ENCODE measurements at regions of chr17 and their contacts with region 1.

Region 1: GRCh38 chr17:61461967-61462718 is 9.9 kb downstream of the TBX4 start:
- DNase-seq: peak; percentile 57 to 73
- H3K4me3 ChIP-seq: peak overlapping the region; percentile 37
- H3K4me3 Mint-ChIP-seq: peak overlapping the region; percentile 72
- H3K27ac Mint-ChIP-seq: peak overlapping the region; percentile 72
- H3K4me1 ChIP-seq: peaks cover 68% of the 10 kb centered on the region
- H3K4me1 Mint-ChIP-seq: peaks cover 59% of the 10 kb centered on the region
- H3K27me3 ChIP-seq: no peaks in the 10 kb centered on the region
- H3K27me3 Mint-ChIP-seq: no peaks in the 10 kb centered on the region
- CTCF ChIP-seq: no peak

Region 2: DNA sequence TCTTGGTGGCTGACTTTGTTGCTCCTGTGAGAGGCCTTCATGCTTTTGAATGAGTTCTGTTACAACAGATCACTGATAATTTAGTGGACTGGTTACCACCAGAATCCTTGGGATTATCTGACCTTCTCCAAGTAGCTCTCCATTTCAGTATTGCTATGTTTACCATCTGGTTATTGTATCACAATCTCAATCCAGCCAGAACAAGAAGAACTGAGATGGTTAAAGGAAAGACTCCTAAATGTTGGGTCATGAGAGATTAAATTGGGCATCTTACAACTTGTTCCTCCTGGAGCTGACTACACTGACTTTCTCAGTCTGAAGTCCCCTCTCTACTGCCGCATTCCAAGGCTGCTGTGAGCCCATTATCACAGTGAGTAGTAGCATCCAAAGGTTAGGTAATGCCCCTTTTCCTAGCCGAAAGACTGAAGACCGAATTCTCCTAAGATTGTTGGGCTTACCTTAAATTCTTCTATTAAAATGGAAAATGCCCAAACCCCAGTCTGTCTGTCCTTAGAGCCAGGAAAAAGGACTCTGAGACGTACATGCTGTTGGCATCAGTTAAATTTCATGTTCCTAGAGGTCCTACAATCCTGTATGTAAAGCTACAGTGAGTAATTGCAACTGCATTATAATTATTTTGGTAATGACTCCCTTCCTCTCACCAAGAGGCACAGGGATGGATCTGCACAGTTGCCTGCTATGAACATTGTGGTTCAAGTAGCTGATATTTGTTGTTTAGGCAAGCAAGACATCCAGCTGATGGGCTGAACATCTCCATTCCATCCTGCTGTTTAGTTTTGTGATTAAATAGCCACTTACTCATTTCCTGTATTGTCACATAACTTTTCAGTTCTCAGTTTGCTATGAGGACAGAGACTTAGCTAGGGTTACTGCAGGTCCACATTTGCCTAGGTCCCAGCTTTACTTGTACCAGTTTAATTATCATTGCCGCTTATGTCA is 244.0 kb before region 1 on chr17:
- CTCF ChIA-PET with region 1: interaction called, 10 read pairs
- POLR2A ChIA-PET with region 1: no interaction called
- intact Hi-C with region 1: no loop called
- DNase-seq: no peak
- H3K4me3 ChIP-seq: no peak overlapping the region
- H3K4me3 Mint-ChIP-seq: no peak overlapping the region
- H3K27ac Mint-ChIP-seq: no peak overlapping the region
- H3K4me1 ChIP-seq: peaks cover 17% of the 10 kb centered on the region
- H3K4me1 Mint-ChIP-seq: peaks cover 13% of the 10 kb centered on the region
- H3K27me3 ChIP-seq: no peaks in the 10 kb centered on the region
- H3K27me3 Mint-ChIP-seq: no peaks in the 10 kb centered on the region
- CTCF ChIP-seq: no peak

Region 3: GRCh38 chr17:61426731-61427376 is 35.3 kb before region 1 on chr17:
- CTCF ChIA-PET with region 1: interaction called, 5 read pairs
- POLR2A ChIA-PET with region 1: interaction called, 5 read pairs
- intact Hi-C with region 1: loop called (anchors 1 kb)
- DNase-seq: peak; percentile 59 to 77
- H3K4me3 ChIP-seq: no peak overlapping the region
- H3K4me3 Mint-ChIP-seq: no peak overlapping the region
- H3K27ac Mint-ChIP-seq: peak overlapping the region; percentile 31
- H3K4me1 ChIP-seq: peaks cover 28% of the 10 kb centered on the region
- H3K4me1 Mint-ChIP-seq: peaks cover 29% of the 10 kb centered on the region
- H3K27me3 ChIP-seq: no peaks in the 10 kb centered on the region
- H3K27me3 Mint-ChIP-seq: no peaks in the 10 kb centered on the region
- CTCF ChIP-seq: peak; percentile 13 to 21

Region 4: GRCh38 chr17:61495145-61495857 is 33.2 kb after region 1 on chr17:
- CTCF ChIA-PET with region 1: interaction called, 5 read pairs
- POLR2A ChIA-PET with region 1: no interaction called
- intact Hi-C with region 1: loop called (anchors 1 kb)
- DNase-seq: no peak
- H3K4me3 ChIP-seq: no peak overlapping the region
- H3K4me3 Mint-ChIP-seq: peak overlapping the region; percentile 38
- H3K27ac Mint-ChIP-seq: peak overlapping the region; percentile 42
- H3K4me1 ChIP-seq: peaks cover 42% of the 10 kb centered on the region
- H3K4me1 Mint-ChIP-seq: peaks cover 26% of the 10 kb centered on the region
- H3K27me3 ChIP-seq: no peaks in the 10 kb centered on the region
- H3K27me3 Mint-ChIP-seq: no peaks in the 10 kb centered on the region
- CTCF ChIP-seq: no peak

Region 5: DNA sequence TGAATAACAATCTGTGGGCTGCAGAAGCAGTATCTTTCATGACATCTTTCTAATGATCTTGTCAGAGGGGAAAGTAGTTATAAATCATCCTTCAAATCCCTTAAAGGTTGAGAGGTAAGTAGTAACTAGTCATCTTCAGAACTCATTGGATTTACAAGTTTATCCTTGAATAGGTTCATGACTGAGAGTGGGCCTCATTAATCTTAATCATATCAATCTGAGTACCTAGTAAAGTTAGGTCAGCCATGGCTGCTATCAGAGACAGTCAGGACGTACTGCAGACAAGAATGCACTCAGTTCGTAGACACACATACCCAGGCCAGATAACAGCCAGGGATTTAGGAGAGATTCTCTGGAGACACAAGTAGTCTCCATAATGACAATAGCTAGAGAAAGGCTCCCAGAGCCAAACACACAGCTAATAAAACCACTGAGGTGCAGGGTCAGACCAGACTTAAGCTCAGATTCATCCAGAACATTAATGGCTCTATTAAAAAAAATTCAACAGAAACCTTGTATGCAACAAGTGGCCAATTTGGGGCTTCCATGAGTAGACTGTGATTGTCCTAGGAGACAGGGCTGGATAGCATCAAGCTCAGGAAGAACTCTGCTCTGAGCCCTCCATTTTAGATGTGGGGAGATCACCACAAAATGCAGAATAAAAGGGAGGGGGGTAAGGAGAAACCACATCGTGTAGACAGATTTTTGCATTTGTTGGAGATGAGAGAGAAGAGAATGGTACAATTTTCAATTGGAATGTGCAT is 55.9 kb after region 1 on chr17:
- CTCF ChIA-PET with region 1: no interaction called
- POLR2A ChIA-PET with region 1: no interaction called
- intact Hi-C with region 1: no loop called
- DNase-seq: no peak
- H3K4me3 ChIP-seq: no peak overlapping the region
- H3K4me3 Mint-ChIP-seq: no peak overlapping the region
- H3K27ac Mint-ChIP-seq: no peak overlapping the region
- H3K4me1 ChIP-seq: 0 out of 2 replicates have a peak, but pooled peaks cover 7% of the 10 kb centered on the region
- H3K4me1 Mint-ChIP-seq: no peaks in the 10 kb centered on the region
- H3K27me3 ChIP-seq: no peaks in the 10 kb centered on the region
- H3K27me3 Mint-ChIP-seq: peaks cover 4% of the 10 kb centered on the region
- CTCF ChIP-seq: no peak

Region 6: DNA sequence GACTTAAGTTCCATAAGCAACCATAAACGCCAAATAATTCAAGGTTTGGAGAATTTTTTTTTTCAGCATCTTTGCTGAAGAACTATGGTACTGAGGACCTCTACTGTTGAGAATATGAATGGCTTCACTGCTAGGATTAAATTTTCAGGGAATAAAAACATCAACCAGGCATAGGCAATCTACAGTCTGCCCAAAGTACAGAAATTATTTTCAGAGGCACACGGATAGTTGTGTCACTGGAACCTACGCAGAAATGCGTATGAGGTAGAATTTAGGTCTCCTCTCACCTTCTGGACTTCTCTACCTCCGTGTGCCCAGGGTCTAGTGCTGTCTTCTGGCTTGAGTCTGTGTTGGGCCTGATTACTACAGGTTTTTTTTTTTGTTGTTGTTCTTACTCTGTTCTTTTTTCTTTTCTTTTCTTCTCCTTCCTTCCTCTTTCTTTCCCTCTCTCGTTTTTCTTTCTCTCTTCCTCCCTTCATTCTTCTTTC is 89.2 kb after region 1 on chr17:
- CTCF ChIA-PET with region 1: no interaction called
- POLR2A ChIA-PET with region 1: no interaction called
- intact Hi-C with region 1: loop called (anchors 2 kb)
- DNase-seq: peak in 1 of 2 experiments; percentile 52
- H3K4me3 ChIP-seq: no peak overlapping the region
- H3K4me3 Mint-ChIP-seq: no peak overlapping the region
- H3K27ac Mint-ChIP-seq: no peak overlapping the region
- H3K4me1 ChIP-seq: no peaks in the 10 kb centered on the region
- H3K4me1 Mint-ChIP-seq: no peaks in the 10 kb centered on the region
- H3K27me3 ChIP-seq: no peaks in the 10 kb centered on the region
- H3K27me3 Mint-ChIP-seq: peaks cover 6% of the 10 kb centered on the region
- CTCF ChIP-seq: peak; percentile 68 to 74

Measured in Caco-2 (cell line).